ENCODE measurements at regions of chr10 and their contacts with region 1.

Region 1: DNA sequence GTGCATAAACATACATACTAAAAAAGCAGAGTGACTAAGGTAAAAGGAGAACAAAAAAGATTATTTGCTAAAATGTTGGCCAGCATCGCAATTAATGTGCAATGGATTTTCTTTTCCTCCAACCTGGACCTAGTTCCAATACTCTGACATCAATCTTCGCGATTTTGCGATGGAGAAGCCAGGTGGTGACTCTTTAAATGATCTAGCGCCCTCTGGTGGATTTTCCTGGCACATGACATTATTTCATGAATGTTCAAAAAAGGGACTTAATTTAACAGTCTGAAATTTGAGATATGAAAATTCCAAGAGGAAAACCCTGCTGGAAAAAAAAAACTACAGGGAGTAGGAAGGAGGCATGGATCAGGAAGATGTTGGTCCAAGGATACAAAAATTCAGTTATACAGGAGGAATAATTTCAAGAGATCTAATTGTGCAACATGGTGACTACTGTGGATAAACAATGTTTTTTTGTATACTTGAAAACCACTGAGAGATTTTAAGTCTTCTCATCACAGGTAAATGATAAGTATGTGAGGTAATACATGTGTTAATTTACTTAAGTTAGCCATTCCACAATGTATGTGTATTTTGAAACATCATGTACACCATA is 4.3 kb upstream of the KCNMA1 start:
- DNase-seq: peak in 1 of 3 donors; percentile 92
- ATAC-seq: peak; percentile 62
- H3K4me3 ChIP-seq: no peak overlapping the region
- H3K4me1 ChIP-seq: peaks cover 7% of the 10 kb centered on the region
- CTCF ChIP-seq: peak; percentile 59

Region 2: DNA sequence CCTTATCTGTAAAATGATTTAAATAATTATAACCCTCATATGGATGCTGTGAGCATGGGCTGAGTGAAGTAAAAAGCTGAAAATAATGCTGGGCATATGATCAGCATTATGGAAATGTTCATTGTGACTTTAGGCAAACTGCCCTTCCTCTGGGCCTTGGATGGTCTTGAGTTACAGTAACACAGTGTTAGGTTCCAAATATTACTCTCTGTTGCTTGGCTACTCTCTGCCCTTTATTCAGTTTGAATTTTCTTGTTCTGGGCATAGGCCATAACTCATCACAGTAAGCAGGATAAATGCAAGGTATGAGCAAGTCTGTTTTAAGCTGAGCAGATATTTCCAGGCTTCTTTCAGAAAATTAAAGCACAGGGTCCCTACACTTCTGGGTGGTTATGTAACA is 872.3 kb before region 1 on chr10:
- intact Hi-C with region 1: no loop called
- DNase-seq: no peak
- ATAC-seq: no peak
- H3K4me3 ChIP-seq: no peak overlapping the region
- H3K4me1 ChIP-seq: no peaks in the 10 kb centered on the region
- CTCF ChIP-seq: no peak

Region 3: GRCh38 chr10:77391605-77392235 is 250.2 kb before region 1 on chr10:
- intact Hi-C with region 1: loop called (anchors 5 kb)
- DNase-seq: peak in 2 of 3 donors; percentile 75 to 84
- ATAC-seq: peak; percentile 80
- H3K4me3 ChIP-seq: no peak overlapping the region
- H3K4me1 ChIP-seq: no peaks in the 10 kb centered on the region
- CTCF ChIP-seq: peak; percentile 48

Region 4: GRCh38 chr10:77398558-77398957 is 243.3 kb before region 1 on chr10:
- intact Hi-C with region 1: loop called (anchors 5 kb)
- DNase-seq: no peak
- ATAC-seq: no peak
- H3K4me3 ChIP-seq: no peak overlapping the region
- H3K4me1 ChIP-seq: no peaks in the 10 kb centered on the region
- CTCF ChIP-seq: no peak